Aorta (tissue), 5 donors: ENCODE measurements at regions of chr3 and their contacts with region 1.

Region 1: DNA sequence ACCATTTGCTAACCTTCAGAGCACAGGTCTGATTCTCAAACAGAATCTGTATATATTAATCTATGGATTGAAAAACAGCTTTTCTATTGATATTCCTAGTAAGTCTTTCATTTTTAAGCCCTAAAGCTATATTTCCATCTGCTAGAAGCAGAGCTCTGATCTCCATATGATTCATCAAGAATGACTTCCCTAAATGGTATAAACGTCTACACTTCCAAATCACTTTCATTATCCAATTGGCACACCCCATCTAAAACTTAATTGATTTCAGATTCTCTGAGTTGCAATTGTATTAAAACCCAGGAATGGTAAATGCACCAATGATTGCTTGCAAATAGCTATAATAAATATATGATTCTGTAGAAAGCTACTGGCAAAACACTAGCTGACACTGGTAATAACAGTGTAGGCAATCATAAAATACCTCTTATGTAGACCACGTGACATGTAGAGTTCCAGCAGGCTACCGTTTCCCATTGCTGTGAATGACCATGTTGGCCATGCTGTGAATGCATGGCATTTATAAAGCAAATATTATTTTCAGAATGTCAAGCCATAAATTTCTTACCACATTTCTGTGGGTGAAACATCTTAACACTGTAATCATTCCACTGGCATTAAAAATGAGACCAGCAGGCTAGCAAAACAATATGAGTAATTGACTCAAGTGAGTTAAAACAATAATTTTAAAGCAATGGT is 226.0 kb downstream of the ZMAT3 start:
- DNase-seq: no peak
- ATAC-seq: no peak
- H3K4me3 ChIP-seq: no peak overlapping the region
- H3K27ac ChIP-seq: no peak overlapping the region
- H3K4me1 ChIP-seq: peaks cover 2 to 13% of the 10 kb centered on the region in 2 donors
- H3K27me3 ChIP-seq: no peaks in the 10 kb centered on the region

Region 2: DNA sequence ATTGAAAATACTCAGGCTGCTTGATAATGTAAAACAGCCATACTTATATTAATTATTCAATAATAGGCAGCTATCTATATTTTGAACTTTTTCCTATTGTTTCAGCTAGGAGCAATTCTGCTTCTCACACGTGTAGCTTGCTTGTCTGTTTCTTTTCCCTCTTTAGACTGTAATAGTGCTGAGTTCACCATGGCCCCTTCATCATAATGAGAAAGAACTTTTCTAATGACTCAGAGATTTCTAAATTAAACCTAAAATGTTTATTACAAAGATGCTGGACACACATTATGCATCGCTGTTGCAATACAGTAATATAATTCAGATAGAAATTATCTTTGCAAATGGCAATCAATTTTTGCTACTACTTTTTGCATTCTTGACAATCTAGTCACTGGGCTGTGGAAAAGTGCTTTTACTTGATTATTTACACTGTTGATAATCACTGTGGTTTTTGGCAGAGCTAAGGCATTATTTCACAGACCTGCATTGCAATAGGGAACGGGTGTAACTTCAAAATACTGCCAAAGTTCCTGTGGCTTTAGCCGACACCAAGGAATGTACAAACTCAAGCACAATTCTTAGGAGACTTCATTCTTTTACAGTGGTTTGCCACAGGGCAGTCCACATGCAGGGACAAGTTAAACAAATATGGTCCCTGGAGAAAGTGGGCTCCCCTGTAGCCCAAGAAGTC is 1367.3 kb before region 1 on chr3:
- intact Hi-C with region 1: loop called in 1 of 2 experiments (anchors 10 kb)
- DNase-seq: no peak
- ATAC-seq: peak; percentile 90
- H3K4me3 ChIP-seq: no peak overlapping the region
- H3K27ac ChIP-seq: peak overlapping the region in 1 of 2 donors; percentile 68
- H3K4me1 ChIP-seq: peaks cover 3 to 5% of the 10 kb centered on the region in 2 donors
- H3K27me3 ChIP-seq: no peaks in the 10 kb centered on the region

Region 3: DNA sequence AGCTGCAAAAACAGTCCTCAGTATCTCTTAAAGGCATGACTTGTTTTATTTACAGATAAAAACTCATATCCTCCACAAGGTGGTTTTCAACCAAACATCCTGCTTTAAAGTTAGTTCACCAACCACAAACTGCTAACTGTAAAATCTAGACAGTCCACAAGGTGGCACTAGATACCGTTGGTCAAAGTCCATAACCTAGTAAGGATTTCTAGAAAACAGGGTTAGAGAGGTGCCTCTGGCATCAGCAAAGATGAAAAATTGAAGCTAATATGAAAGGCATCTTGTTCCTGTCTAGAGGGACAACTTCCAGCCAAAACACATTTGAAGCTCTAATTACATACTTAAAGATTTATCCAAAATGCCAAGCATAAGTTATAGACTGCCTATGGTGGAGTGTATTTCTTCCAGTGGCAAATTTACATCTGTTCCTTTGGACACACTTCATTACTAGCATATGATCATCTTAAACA is 170.0 kb after region 1 on chr3:
- intact Hi-C with region 1: no loop called
- DNase-seq: no peak
- ATAC-seq: peak; percentile 92
- H3K4me3 ChIP-seq: no peak overlapping the region
- H3K27ac ChIP-seq: no peak overlapping the region
- H3K4me1 ChIP-seq: peaks cover 0 to 2% of the 10 kb centered on the region in 2 donors
- H3K27me3 ChIP-seq: no peaks in the 10 kb centered on the region

Region 4: DNA sequence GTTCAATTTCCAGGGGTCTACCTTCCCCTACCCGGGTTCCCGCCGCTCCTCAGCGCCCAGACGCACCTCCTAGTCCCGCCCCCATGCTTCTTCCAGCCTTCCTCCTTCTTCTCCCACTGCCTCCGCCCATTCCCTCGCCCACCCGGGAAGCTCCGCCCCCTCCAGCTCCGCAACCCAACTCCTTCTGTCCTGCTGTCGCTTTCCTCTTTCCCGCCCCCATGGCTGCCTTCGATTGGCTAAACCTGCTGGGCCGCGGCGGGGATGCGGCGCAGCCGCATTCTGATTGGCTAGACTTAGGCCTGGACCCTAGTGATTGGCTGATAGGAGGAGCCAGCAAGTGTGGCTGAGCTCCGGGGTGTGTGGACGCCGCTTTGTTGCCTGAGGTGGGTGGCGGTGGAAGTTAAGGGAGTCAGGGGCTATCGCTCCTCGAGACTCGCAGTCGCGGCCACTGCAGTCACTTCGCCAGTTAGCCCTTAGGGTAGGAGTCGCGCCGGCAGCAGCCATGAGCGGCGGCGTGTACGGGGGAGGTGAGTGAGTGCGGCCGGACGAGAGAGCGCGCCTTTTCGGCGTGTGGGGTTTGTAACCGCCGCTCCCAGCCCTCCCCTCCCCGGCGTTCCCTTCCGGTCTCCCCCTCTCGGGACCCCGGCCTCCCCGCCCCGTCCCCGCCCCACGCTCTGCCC is 717.2 kb after region 1 on chr3 and contains the start of gene ACTL6A:
- intact Hi-C with region 1: no loop called
- DNase-seq: peak; percentile 100
- ATAC-seq: peak; percentile 99
- H3K4me3 ChIP-seq: peak within 1 kb of the TSS; percentile 82 to 87
- H3K27ac ChIP-seq: peak within 1 kb of the TSS in 1 of 2 donors; percentile 55
- H3K4me1 ChIP-seq: peaks cover 0 to 4% of the 10 kb centered on the region in 2 donors
- H3K27me3 ChIP-seq: no peaks in the 10 kb centered on the region
- total RNA-seq, gene ACTL6A: 22.5 to 24.8 TPM